ENCODE measurements at regions of chr2 and their contacts with region 1.

Region 1: DNA sequence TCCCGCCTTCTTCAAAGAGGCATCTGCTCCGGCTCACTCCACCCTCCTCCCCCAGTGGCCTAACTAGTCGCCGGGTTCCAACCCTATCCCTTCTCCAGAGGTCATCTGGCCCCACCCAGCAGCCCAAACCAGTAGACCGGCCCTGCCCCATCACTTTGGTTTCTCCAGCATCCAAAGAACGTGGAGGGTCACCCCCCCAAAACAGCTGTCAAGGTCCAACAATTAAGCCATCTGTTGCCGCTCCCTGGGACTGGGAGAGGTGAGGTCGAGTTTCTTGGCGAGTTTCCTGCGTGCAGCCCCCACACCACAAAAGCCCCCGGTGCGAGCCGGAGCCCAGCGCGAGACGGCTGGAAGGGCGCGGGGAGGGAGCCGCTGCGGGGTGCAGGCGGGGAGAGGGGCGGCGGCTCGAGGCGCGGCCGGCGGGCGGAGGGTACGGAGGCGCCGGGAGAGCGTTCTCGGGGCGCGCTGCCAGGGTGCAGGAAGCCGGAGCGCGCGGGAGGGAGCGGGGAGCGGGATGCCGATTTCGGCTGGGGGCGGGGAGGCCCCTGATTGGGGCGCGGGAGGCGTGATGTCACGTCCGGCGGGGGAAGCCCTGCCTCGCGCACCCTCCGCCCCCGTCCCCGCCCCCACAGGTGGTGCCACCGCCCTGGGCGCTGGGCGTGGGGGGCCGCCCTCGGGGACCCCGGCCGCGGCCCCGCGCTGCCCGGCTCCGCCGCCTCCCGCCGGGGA is 571 bp upstream of the GPC1 start:
- DNase-seq: no peak
- H3K4me3 ChIP-seq: peak overlapping the region; percentile 12 to 36 (median 26)
- H3K27ac ChIP-seq: no peak overlapping the region
- H3K4me1 ChIP-seq: no peaks in the 10 kb centered on the region
- H3K27me3 ChIP-seq: peaks cover 7 to 15% of the 10 kb centered on the region in 2 experiments
- CTCF ChIP-seq: no peak
- POLR2A ChIP-seq: no peak

Region 2: DNA sequence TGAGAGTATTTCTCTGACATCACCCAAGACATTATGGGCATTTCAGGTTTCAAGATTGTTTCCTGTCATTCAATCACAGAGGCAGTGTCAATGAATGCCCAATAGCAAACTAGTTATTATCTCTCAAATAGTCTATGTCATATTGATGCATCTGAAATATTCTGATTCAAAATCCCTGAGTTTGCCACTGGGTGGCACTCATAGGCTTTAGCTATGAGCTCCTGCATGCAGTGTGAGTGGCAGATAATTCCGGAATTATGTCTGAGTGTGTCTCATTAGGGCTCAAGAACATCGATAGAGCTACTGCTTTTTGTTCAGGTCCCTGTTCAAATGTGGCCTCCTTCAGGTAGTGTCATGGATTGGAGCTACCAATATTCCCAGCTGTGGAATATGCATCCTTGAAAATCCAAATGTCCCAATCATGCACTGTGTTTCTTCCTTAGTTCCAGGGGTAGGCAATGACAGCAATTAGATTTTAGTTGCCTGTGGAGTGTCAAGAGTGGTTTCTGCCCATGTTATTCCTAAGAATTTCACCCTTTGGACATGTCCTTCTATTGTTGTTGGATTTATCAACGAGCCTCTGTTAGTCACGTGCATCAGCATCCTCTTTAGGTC is 373.8 kb before region 1 on chr2:
- CTCF ChIA-PET with region 1: no interaction called
- POLR2A ChIA-PET with region 1: no interaction called
- dilution Hi-C with region 1: no loop called
- intact Hi-C with region 1: loop called (anchors 2 kb)
- DNase-seq: peak; percentile 60
- H3K4me3 ChIP-seq: no peak overlapping the region
- H3K27ac ChIP-seq: no peak overlapping the region
- H3K4me1 ChIP-seq: no peaks in the 10 kb centered on the region
- H3K27me3 ChIP-seq: no peaks in the 10 kb centered on the region
- CTCF ChIP-seq: peak; percentile 34 to 51
- POLR2A ChIP-seq: no peak

Region 3: DNA sequence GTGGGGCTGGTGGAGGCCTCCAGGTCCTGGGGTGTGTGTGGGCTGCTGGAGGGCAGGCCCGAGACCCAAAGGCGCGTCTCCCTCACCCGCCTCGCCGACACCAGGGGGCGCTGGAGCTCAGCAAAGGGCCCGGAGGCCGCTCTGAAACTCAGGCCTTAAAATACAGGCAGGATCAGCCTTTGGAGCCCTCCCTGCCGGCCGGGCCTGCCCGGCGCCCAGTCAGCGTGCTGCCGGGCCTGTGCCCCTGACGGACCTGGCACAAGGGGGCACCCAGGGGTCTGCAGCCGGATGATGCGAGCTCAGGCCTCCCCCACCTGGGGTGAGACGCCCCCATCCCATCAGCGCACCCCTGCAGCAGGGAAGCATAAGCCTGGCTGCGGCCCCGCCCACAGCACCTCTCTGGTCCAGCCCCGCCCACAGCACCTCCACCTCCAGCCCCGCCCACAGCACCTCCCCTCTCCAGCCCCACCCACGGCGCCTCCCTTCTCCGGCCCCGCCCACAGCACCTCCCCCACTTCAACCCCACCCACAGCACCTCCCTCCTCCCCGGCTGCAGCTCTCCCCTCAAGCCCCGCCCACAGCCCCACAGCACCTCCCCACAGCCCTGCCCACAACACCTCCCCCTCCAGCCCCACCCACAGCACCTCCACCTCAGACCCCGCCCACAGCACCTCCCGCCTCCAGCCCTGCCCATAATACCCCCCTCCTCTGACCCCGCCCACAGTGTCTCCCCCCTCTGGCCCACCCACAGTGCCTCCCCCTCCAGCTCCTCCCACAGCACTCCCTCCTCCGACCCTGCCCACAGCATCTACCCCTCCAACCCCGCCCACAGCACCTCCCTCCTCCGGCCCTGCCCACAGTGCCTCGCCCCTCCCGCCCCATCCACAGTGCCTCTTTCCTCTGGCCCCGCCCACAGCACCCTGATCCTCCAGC is 201.7 kb before region 1 on chr2:
- CTCF ChIA-PET with region 1: interaction called, 22 read pairs
- POLR2A ChIA-PET with region 1: no interaction called
- dilution Hi-C with region 1: no loop called
- intact Hi-C with region 1: loop called (anchors 1 kb)
- DNase-seq: peak; percentile 44
- H3K4me3 ChIP-seq: no peak overlapping the region
- H3K27ac ChIP-seq: no peak overlapping the region
- H3K4me1 ChIP-seq: peaks cover 6% of the 10 kb centered on the region
- H3K27me3 ChIP-seq: no peaks in the 10 kb centered on the region
- CTCF ChIP-seq: peak; percentile 81 to 93
- POLR2A ChIP-seq: no peak

Region 4: GRCh38 chr2:240303896-240304745 is 130.8 kb before region 1 on chr2:
- CTCF ChIA-PET with region 1: no interaction called
- POLR2A ChIA-PET with region 1: no interaction called
- dilution Hi-C with region 1: no loop called
- intact Hi-C with region 1: loop called (anchors 2 kb)
- DNase-seq: no peak
- H3K4me3 ChIP-seq: no peak overlapping the region
- H3K27ac ChIP-seq: no peak overlapping the region
- H3K4me1 ChIP-seq: no peaks in the 10 kb centered on the region
- H3K27me3 ChIP-seq: no peaks in the 10 kb centered on the region
- CTCF ChIP-seq: no peak
- POLR2A ChIP-seq: no peak

Region 5: DNA sequence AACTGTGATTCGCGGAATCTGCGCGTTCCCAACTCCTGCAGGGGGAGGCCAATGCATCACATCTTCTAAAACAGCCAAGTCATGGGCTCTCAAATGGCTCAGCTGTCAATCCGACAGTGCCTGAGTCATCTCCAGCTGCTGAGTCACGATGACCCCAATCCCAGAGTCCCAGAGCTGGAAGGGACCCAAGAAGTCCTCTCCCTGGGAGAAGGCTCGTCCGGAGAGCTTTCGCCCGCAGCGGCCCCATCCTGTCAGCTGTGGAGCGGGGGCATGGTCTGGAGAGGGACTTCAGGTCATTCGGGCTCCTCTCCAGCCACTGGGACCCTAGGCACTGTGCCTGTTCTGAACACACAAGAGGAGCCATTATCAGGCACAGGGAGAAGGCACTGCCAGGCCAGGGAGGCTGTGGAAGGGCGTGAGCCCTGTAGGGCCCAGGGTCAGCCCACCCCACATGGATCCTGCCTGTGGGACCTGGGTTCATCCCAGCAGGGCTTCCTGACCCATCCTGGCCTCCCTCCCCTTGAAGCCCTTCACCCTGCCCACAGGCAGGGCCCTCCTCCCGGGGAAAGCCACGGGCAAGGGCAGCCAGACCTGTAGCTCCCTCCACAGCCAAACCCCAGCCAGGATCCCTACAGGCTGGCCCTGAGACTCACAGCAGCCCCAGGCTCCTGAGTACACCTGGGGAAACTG is 47.1 kb before region 1 on chr2:
- CTCF ChIA-PET with region 1: no interaction called
- POLR2A ChIA-PET with region 1: no interaction called
- dilution Hi-C with region 1: no loop called
- intact Hi-C with region 1: loop called (anchors 2 kb)
- DNase-seq: peak; percentile 29
- H3K4me3 ChIP-seq: no peak overlapping the region
- H3K27ac ChIP-seq: peak overlapping the region; percentile 66
- H3K4me1 ChIP-seq: peaks cover 9% of the 10 kb centered on the region
- H3K27me3 ChIP-seq: no peaks in the 10 kb centered on the region
- CTCF ChIP-seq: no peak
- POLR2A ChIP-seq: no peak

Region 6: DNA sequence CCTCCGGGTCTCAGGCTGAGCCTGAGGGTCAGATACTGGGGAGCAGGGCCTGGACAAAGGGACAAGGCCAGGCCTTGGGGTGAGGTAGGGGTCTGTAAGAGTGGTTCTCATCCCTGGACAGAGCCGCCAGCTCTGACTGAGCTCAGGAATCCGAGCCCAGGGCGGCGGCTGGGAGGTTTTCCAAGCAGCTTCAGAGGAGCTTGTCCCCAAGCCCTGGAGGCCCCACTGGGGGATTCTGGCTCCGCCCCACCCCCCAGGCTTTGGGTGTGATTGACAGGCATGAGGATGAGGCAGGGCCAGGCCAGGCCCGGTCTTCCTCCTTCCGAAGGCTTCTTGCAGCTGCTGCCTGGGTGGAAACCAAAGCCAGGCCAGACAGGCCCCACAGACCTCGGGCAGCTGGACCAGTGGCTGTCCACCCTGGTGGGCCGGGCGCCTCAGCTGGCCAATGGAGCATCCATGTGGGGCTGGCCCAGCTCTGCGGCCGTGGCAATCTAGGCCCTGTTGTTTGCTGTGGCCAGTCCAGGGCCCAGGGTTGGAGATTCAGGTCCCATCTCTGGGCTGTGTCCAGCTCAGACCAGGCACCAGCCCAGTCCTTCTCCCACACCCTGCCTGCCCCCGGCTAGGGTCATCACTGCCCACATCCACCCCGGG is 22.6 kb before region 1 on chr2:
- CTCF ChIA-PET with region 1: no interaction called
- POLR2A ChIA-PET with region 1: no interaction called
- dilution Hi-C with region 1: no loop called
- intact Hi-C with region 1: no loop called
- DNase-seq: no peak
- H3K4me3 ChIP-seq: no peak overlapping the region
- H3K27ac ChIP-seq: no peak overlapping the region
- H3K4me1 ChIP-seq: no peaks in the 10 kb centered on the region
- H3K27me3 ChIP-seq: no peaks in the 10 kb centered on the region
- CTCF ChIP-seq: no peak
- POLR2A ChIP-seq: no peak

Region 7: DNA sequence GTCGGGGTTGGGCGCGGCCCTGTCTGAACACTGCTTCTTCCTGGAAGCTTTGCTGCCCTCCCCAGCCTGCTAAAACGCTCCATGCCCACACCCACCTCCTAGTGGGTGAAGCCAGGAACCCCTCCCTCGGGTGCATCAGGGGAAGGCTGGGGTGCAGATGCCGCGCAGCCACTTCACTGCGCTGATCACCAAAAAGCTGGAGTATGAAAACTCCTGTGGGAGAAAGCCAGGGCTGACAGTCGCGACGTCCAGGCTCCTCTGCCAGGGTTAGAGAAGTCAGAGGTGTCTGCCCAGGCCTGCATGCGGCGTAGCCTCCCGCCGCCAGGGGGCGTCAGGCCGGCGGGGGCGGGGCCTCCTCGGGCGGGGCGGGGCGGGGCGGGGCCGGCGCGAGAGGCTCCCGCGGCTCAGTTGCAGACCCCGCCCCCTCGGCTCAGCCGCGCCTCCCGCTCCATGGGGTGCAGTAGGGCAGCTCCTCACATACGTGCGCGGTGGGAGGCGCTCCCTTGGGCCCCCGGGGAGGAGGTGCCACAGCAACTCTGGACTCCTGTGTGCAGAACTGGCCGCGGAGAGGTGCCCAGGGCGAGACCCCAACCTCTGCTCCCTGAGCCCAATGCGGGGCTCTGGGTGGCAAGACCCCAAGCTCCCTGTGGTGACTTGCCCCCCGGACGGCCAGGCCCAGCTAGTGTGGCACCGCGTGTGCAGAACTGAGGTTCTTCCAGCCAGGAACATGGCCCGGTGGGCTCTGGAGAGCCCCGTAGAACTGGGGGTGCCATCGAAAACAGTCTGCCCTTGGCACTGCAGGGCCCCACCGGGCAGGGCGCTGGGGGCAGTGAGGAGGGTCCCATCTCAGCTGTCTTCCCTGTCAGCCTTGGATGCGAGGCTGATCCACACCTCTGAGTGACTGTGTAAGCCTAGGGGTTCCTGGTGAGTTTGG is 131.6 kb after region 1 on chr2:
- CTCF ChIA-PET with region 1: no interaction called
- POLR2A ChIA-PET with region 1: no interaction called
- dilution Hi-C with region 1: no loop called
- intact Hi-C with region 1: loop called (anchors 5 kb)
- DNase-seq: peak; percentile 79
- H3K4me3 ChIP-seq: peak overlapping the region in 2 of 3 experiments; percentile 18 to 20
- H3K27ac ChIP-seq: peak overlapping the region; percentile 98
- H3K4me1 ChIP-seq: peaks cover 41% of the 10 kb centered on the region
- H3K27me3 ChIP-seq: no peaks in the 10 kb centered on the region
- CTCF ChIP-seq: peak; percentile 61 to 79
- POLR2A ChIP-seq: no peak